Adrenal gland (tissue), 19 donors: ENCODE measurements at regions of chr1 and their contacts with region 1.

Region 1: DNA sequence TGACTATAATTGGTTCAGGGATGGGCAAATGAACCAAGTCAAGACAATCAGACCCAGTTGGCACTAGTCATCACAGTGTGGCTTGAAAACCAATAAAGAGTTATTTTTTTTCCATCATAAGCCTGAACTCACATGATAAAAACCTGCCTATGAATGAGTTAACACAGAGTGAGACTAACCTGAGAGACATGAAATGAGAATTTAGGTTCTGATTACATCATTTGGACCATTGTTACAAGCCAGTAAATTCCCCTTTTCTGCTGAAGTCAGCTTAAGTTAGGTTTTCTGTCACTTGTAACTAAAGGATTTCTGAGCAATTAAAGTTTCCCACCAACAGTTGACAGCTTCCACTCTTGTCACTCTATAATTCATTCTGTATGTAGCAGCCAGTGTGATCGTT is 9.6 kb upstream of the RSBN1 start:
- DNase-seq: no peak
- H3K4me3 ChIP-seq: no peak overlapping the region
- H3K27ac ChIP-seq: no peak overlapping the region
- H3K4me1 ChIP-seq: no peaks in the 10 kb centered on the region
- H3K27me3 ChIP-seq: no peaks in the 10 kb centered on the region
- CTCF ChIP-seq: no peak
- POLR2A ChIP-seq: no peak

Region 2: DNA sequence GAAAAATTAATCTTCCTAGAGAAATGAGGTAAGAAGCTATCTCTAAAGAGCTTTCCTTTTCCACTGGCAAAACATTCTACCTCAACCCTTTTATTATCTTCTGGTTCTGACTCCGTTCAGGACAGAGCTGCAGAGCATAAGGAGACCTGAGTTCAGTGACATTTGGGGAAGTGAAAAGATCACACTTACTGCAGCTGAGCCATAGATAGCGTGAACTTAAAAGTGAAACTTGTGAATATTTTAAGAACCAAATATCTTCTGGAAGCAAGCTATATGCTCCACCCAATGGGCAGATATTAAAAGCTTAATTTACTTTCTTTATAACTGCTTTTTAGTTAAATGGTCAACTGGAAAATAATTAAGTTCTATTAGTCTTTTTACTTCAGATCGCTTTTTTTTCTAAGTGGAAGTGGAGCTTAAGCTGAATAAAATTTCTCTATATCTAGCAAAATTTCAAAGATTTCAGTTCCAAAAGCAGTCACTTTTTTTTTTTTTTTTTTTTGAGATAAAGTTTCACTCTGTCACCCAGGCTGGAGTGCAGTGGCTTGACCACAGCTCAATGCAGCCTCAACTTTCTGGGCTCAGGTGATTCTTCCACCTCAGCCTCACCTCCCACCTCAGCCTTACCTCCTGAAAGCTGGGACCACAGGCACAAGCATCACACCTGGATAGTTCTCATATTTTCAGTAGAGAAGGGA is 37.7 kb after region 1 on chr1:
- intact Hi-C with region 1: no loop called
- DNase-seq: no peak
- H3K4me3 ChIP-seq: peak overlapping the region in 1 of 4 donors; percentile 5
- H3K27ac ChIP-seq: peak overlapping the region in 1 of 5 donors; percentile 15
- H3K4me1 ChIP-seq: no peaks in the 10 kb centered on the region
- H3K27me3 ChIP-seq: no peaks in the 10 kb centered on the region
- CTCF ChIP-seq: no peak
- POLR2A ChIP-seq: no peak

Region 3: GRCh38 chr1:113912594-113913311 is 90.8 kb after region 1 on chr1:
- intact Hi-C with region 1: loop called in 1 of 2 experiments (anchors 10 kb)
- DNase-seq: peak in 6 of 7 donors; percentile 25 to 62 (median 32)
- H3K4me3 ChIP-seq: no peak overlapping the region
- H3K27ac ChIP-seq: peak overlapping the region in 2 of 5 donors; percentile 29 to 55
- H3K4me1 ChIP-seq: no peaks in the 10 kb centered on the region
- H3K27me3 ChIP-seq: no peaks in the 10 kb centered on the region
- CTCF ChIP-seq: no peak
- POLR2A ChIP-seq: no peak